GM10248 (cell line): ENCODE measurements at regions of chr6 and their contacts with region 1.

Region 1: DNA sequence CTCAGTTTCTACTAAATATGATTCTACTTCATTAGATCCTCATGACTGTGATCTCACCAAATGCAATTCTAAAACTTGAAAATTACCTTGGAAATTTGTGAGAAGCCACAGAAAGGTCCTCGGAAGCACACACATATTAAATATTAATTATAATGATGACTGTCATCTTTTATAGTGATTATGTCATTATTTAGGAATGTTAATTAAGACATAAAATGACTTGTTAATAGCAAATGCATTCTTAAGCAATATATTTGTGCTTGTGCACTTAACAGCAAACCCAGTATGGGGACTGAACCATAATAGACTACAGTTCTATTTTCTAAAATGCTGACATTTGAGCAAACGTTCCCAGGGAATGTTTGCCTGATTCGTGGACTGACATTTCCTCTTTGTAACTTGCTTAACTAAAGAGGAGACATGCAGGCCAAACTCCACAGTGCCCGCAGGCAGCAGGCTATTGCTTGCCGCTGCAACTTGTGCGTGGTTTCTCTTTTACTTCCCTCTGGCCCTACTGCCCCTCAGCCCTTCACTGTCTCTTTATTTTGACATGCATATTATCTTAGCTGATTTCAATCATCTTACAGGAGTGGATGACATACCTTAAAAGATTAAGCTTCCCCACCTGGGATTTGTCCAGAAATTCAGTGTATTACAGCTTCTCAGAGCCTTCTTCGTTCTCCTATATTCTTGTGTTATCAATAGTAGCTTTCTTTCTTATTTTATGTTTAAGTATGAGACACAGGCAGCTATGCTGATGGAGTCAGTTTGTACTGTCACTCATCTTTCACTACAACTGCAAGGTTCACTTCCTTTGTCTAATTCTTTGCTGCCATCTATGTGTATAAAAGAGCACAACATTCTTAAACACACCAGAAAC is 141.5 kb downstream of the GMDS start:
- DNase-seq: peak; percentile 59
- CTCF ChIP-seq: peak; percentile 57

Region 2: DNA sequence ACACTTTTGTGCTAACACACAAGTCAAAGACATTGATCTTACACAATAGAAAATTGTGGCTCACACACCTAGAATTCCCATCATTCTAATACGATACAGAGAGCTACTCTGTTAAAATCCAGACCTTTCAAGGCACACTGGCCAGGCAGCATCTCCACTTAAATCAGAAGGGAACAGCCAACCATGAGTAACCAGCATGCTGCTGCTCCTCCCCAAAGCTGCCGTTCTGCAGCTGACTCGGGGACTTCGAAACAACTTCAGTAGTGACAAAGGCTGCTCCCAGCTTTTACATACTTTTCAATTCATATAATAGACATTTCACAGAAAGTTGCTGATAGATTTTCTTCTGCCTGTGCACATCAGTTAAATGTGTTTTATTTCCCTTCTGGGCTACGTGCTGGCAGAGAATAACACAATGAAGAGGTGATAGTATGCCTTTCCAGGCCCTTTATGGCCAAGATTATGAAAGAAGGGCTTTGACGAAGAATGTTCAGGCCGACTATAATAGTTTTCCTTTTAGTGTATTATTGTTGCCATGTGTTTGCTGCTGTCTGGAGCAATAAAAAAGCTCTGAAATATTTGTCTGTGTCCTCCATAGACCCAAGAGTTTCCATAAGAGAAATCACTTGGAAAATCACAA is 17.4 kb before region 1 on chr6:
- CTCF ChIA-PET with region 1: interaction called, 10 read pairs
- POLR2A ChIA-PET with region 1: no interaction called
- DNase-seq: no peak
- CTCF ChIP-seq: no peak